Activated T-helper 1 cell treated with anti-CD3 and anti-CD28 coated beads, Interleukin-12 subunit alpha, Interleukin-12 subunit beta, Interleukin-2, Interleukin-4 antibody, amounts not matched to agents 30 ng/mL and 10 ng/mL and 1 ng/mL, durations not matched to agents 14 hours and 24 hours and 36 hours (primary cell): ENCODE measurements at regions of chr1 and their contacts with region 1.

Region 1: GRCh38 chr1:200473698-200474371 is 64.0 kb upstream of the ZNF281 start:
- DNase-seq: no peak
- H3K4me3 Mint-ChIP-seq: peak overlapping the region; percentile 62
- H3K27ac Mint-ChIP-seq: peak overlapping the region; percentile 85
- H3K4me1 Mint-ChIP-seq: peaks cover 43% of the 10 kb centered on the region
- H3K27me3 Mint-ChIP-seq: peaks cover 2% of the 10 kb centered on the region

Region 2: DNA sequence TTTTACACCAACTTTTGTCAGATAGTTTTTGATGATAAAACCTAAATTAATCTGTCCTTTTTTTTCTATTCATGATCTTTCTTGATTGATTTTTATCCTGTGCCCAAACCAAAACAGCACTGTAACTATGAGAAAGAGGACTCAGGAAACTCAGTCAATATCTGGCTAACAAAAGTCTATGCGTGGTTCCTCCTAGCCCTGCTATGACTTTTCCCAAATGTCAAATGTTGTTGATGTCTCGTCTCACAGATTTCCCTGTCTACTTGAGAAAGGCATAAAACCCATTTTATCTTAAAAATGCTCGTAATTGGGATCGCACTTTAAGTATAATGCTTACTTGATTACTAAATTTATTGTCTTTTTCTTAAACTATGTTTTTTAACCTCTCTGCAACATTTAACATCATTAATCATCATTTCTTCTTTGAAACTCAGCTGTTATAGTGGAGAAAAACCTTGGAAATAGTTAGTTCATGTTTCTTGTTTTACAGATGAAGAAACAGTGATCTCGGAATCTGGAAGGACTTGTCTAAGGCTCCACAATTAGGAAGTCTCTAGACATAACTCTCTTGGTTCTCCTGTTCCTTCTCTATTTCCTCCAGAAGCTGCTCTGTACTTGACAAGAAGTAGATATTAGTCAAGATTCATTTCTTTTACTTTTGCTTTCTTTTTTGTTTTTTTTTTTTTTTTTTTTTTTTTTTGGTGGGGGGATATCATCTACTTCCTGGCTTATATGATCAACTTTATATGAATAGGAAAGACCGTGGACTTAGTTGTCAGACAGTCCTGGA is 1861.2 kb before region 1 on chr1:
- intact Hi-C with region 1: loop called (anchors 10 kb)
- DNase-seq: no peak
- H3K4me3 Mint-ChIP-seq: peak overlapping the region; percentile 78
- H3K27ac Mint-ChIP-seq: peak overlapping the region; percentile 88
- H3K4me1 Mint-ChIP-seq: peaks cover 67% of the 10 kb centered on the region
- H3K27me3 Mint-ChIP-seq: no peaks in the 10 kb centered on the region

Region 3: GRCh38 chr1:199948587-199949280 is 525.1 kb before region 1 on chr1:
- intact Hi-C with region 1: loop called (anchors 5 kb)
- DNase-seq: no peak
- H3K4me3 Mint-ChIP-seq: no peak overlapping the region
- H3K27ac Mint-ChIP-seq: no peak overlapping the region
- H3K4me1 Mint-ChIP-seq: no peaks in the 10 kb centered on the region
- H3K27me3 Mint-ChIP-seq: peaks cover 50% of the 10 kb centered on the region

Region 4: GRCh38 chr1:200184196-200184595 is 289.6 kb before region 1 on chr1:
- intact Hi-C with region 1: no loop called
- DNase-seq: no peak
- H3K4me3 Mint-ChIP-seq: no peak overlapping the region
- H3K27ac Mint-ChIP-seq: no peak overlapping the region
- H3K4me1 Mint-ChIP-seq: peaks cover 6% of the 10 kb centered on the region
- H3K27me3 Mint-ChIP-seq: peaks cover 10% of the 10 kb centered on the region

Region 5: DNA sequence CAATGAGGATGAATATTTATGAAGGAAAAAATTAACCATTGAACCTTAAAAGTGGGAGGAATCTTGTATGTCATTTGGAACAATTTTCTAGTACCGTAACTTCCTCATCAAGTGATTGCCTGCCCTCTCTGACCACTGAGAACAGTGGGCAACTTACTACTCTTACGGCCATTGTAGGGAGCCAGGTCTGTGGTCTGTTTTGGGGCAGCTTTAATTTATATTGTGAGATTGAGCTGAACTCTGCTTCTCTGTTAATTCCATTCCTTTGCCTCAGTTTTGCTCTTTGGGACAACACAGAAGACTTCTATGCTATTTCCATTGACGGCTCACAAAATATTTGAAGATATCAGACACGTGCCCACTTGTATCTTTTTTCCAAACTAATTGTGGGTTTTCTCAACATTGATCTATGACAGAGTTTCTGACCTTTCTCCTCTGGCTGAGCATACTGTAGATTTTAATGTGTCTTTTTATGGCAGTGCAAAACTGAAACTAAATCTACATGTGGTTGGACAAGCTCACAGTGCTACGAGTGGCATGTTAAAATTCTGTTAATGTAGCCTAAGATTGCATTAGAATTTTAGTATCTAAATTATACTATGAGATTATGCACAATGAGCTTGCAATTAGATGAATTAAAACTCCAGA is 36.2 kb before region 1 on chr1:
- intact Hi-C with region 1: loop called (anchors 5 kb)
- DNase-seq: no peak
- H3K4me3 Mint-ChIP-seq: peak overlapping the region; percentile 69
- H3K27ac Mint-ChIP-seq: peak overlapping the region; percentile 92
- H3K4me1 Mint-ChIP-seq: peaks cover 13% of the 10 kb centered on the region
- H3K27me3 Mint-ChIP-seq: no peaks in the 10 kb centered on the region

Region 6: GRCh38 chr1:200448034-200448762 is 25.6 kb before region 1 on chr1:
- intact Hi-C with region 1: loop called (anchors 1 kb)
- DNase-seq: no peak
- H3K4me3 Mint-ChIP-seq: peak overlapping the region; percentile 53
- H3K27ac Mint-ChIP-seq: peak overlapping the region; percentile 97
- H3K4me1 Mint-ChIP-seq: peaks cover 59% of the 10 kb centered on the region
- H3K27me3 Mint-ChIP-seq: no peaks in the 10 kb centered on the region